AG04450 (cell line): ENCODE measurements at regions of chr3 and their contacts with region 1.

Region 1: GRCh38 chr3:195863121-195864006 is 45.0 kb downstream of the TNK2 start:
- DNase-seq: peak; percentile 79
- H3K4me3 ChIP-seq: no peak overlapping the region
- H3K27ac ChIP-seq: peak overlapping the region; percentile 2
- H3K27me3 ChIP-seq: no peaks in the 10 kb centered on the region
- CTCF ChIP-seq: peak; percentile 97

Region 2: DNA sequence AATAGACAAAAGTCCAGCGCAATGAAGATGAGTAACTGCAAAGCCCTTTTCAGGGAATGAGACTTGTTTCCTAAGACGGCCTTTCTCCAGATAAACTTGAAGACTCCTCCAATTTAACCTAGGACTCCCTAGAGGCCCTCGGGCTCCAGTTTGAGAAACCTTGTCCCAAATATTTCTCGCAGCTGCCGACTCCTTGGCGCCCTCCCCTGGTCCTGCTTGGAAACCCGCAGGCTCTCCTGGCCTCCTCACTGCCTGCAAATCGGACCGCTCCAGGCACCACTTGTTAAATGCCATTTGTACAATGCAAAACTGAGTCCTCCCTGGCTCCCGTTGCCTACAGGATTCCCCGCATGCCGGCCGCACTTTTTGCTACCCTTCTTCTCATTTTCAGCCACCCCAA is 88.4 kb before region 1 on chr3:
- CTCF ChIA-PET with region 1: no interaction called
- POLR2A ChIA-PET with region 1: no interaction called
- DNase-seq: no peak
- H3K4me3 ChIP-seq: no peak overlapping the region
- H3K27ac ChIP-seq: no peak overlapping the region
- H3K27me3 ChIP-seq: no peaks in the 10 kb centered on the region
- CTCF ChIP-seq: peak; percentile 46

Region 3: DNA sequence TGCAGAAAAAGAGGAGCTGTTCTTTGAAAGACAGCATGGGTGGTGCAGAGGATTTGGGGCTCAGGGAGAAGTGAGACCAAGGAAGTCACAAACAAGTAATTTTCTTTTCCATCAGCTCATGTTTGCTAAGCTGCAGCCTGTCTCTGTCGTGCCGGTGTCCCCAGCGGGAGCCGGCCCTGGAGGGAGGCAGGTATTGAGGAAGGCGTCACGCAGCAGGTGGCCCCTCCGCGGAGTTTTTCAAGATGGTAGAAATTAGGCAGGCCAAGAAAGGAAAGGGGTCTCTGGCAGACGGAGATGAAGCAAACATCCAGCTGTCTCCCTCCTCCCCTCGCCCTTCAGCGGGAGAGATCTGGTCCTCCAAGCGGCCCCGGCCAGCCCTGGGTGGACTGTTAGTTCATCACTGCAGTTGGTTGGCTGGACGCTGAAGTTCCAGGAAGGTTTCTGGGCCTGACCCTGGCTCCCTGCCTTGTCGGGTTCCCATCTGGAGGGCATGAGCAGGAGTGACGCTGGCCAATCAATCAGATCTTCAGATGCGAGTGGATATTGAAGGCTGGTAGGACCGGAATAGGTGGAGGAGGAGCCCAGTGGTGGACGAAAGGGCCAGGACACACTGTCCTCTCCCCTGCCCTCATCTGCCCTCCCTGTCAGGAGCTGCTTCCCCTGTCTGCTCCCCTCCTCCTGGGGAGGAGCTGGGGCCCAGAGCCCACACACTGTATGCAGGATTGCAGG is 23.9 kb before region 1 on chr3:
- CTCF ChIA-PET with region 1: interaction called, 10 read pairs
- POLR2A ChIA-PET with region 1: no interaction called
- DNase-seq: no peak
- H3K4me3 ChIP-seq: no peak overlapping the region
- H3K27ac ChIP-seq: no peak overlapping the region
- H3K27me3 ChIP-seq: peaks cover 17% of the 10 kb centered on the region
- CTCF ChIP-seq: no peak

Region 4: GRCh38 chr3:195850857-195851543 is 12.4 kb before region 1 on chr3:
- CTCF ChIA-PET with region 1: interaction called, 20 read pairs
- POLR2A ChIA-PET with region 1: no interaction called
- DNase-seq: peak; percentile 85
- H3K4me3 ChIP-seq: no peak overlapping the region
- H3K27ac ChIP-seq: no peak overlapping the region
- H3K27me3 ChIP-seq: no peaks in the 10 kb centered on the region
- CTCF ChIP-seq: peak; percentile 100

Region 5: GRCh38 chr3:195886181-195887141 is 23.1 kb after region 1 on chr3:
- CTCF ChIA-PET with region 1: interaction called, 143 read pairs
- POLR2A ChIA-PET with region 1: interaction called, 3 read pairs
- DNase-seq: no peak
- H3K4me3 ChIP-seq: no peak overlapping the region
- H3K27ac ChIP-seq: no peak overlapping the region
- H3K27me3 ChIP-seq: no peaks in the 10 kb centered on the region
- CTCF ChIP-seq: no peak

Region 6: DNA sequence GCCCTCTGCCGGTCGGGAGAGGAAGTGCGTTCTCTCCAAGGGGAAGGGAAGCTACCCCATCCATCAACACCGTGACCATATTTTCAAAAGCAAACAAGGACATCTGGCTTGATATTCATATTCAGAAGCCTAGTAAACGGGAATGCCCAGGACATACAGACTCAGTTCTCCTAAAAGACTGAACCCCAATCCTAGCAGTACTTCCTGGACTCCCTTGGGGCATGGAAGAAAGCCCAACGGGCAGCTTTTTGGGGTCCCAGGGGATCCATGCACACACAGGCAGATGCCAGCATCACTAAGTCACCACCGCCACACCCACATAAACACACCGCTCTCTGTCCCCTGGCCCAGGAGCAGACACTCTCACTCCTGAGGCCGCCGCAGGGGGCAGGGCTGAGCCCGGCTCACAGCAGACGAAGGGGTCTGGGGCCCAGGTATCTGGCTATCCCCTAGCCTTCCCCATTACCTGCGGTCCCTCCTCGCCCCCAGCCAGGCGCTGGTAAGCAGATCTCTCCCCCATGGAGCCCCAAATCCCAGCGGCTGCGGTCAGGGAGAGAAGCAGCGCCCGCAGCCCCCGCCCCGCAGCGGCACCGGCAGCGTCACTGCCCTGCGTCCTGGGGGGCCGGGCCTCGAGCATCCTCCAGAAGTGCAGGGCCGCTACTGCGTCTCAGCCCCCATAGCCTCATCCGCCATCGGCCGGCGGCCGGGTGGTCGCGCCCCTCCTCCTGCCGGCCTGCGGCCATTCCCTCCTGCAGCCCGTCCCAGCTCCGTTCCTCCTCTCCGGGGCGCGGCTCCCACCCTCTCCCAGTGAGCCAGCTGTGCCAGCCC is 31.6 kb after region 1 on chr3:
- CTCF ChIA-PET with region 1: interaction called, 143 read pairs
- POLR2A ChIA-PET with region 1: interaction called, 6 read pairs
- DNase-seq: peak; percentile 46
- H3K4me3 ChIP-seq: peak overlapping the region; percentile 72
- H3K27ac ChIP-seq: peak overlapping the region; percentile 31
- H3K27me3 ChIP-seq: no peaks in the 10 kb centered on the region
- CTCF ChIP-seq: peak; percentile 92

Region 7: DNA sequence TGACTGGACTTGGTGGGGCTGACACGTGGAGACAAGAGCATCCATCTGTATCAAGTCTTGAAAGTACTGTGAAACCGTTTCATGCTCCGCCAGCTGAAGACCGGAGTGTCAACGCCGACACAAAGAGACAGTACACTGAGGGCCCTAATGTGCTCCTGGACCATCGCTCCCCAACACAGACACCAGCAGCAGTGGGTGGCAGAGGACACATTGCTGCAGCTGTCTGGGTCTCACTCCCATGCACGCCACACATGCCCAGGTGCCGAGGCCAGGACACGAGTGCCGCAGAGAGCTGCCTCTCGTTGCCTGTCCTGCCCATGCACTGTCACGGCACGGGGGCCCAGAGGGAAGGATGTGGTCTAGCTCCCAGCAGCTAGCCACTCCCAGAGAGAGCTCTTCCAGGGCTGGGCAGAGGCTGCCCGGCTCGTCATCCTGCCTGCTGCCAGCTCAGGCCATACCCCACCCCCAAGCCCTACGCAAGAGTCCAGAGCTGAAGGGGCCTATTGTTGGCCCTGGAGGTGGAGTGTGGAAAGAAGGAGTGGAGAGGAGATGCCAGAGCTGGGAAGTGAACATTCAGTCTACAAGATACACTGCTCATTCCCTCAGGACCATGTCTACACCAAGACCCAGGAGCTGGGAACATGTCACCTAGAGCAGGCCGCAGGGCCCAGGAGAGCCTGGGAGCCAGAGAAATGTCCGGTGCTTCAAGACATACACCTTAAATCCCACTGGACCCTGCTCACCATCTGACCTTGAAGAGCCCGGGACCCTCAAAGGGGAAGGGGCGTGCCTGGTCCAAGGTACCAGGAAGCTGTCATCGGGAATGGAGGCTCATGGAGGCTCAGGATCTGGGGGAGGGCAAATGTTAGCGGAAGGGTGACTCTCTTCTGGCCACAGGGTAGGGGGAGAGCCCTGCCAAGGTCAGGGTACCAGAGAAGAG is 37.3 kb after region 1 on chr3:
- CTCF ChIA-PET with region 1: interaction called, 131 read pairs
- POLR2A ChIA-PET with region 1: no interaction called
- DNase-seq: no peak
- H3K4me3 ChIP-seq: no peak overlapping the region
- H3K27ac ChIP-seq: no peak overlapping the region
- H3K27me3 ChIP-seq: no peaks in the 10 kb centered on the region
- CTCF ChIP-seq: no peak

Region 8: GRCh38 chr3:195909644-195910508 is 46.5 kb after region 1 on chr3:
- CTCF ChIA-PET with region 1: interaction called, 23 read pairs
- POLR2A ChIA-PET with region 1: interaction called, 11 read pairs
- DNase-seq: no peak
- H3K4me3 ChIP-seq: peak overlapping the region; percentile 59
- H3K27ac ChIP-seq: peak overlapping the region; percentile 11
- H3K27me3 ChIP-seq: no peaks in the 10 kb centered on the region
- CTCF ChIP-seq: no peak